Heart right ventricle (tissue), 16 donors: ENCODE measurements at regions of chr3 and their contacts with region 1.

Region 1: GRCh38 chr3:138668107-138668506 is 59.5 kb downstream of the FAIM start:
- DNase-seq: no peak
- ATAC-seq: no peak
- H3K4me3 ChIP-seq: no peak overlapping the region
- H3K27ac ChIP-seq: no peak overlapping the region
- H3K4me1 ChIP-seq: peaks cover 0 to 20% (median 4%) of the 10 kb centered on the region in 9 donors
- H3K27me3 ChIP-seq: no peaks in the 10 kb centered on the region
- CTCF ChIP-seq: no peak

Region 2: GRCh38 chr3:138640537-138640936 is 27.6 kb before region 1 on chr3:
- intact Hi-C with region 1: no loop called
- DNase-seq: no peak
- ATAC-seq: no peak
- H3K4me3 ChIP-seq: no peak overlapping the region
- H3K27ac ChIP-seq: no peak overlapping the region
- H3K4me1 ChIP-seq: no peaks in the 10 kb centered on the region
- H3K27me3 ChIP-seq: no peaks in the 10 kb centered on the region
- CTCF ChIP-seq: no peak

Region 3: DNA sequence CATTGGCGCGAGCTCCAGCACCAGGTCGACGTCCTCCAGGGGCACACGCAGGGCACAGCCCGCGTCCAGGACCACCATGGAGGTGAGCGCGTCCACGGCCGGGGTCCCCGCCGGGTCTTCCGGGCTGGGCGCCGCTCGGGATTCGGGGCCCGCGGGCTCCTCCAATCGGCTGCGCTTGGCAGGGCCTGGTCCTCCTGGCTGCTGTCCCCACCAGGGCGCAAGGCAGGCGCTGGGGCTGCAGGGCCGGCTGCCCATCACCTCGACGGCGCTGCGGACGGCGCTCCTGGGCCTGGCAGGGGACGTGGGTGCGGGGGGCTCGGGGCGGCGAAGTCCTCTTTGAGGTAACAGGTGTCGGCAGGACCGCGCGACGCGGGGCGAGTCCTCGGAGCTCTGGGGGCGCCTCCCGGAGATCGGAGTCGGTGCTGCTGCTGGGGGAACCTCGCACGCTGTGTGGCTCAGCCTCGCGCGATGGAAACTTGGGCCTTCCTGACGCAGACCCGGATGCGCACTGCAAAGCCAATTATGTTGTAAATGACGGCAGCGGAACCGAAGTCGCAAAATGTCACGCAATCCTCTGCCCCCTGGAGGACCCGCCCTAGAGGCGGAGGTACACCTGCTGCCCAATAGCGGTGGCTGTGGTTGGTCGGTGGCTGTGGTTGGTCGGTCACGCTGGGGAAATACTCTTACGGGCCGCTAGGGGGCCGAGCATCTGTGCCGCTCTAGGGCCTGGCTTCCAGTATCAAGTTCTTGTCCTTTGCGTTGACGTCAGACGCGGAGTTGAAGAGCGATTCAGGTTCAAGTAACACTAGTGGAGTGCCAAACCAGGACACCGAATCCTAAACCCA is 376.5 kb after region 1 on chr3 and contains the start of gene PRR23C:
- intact Hi-C with region 1: no loop called
- DNase-seq: no peak
- ATAC-seq: no peak
- H3K4me3 ChIP-seq: no peak within 1 kb of the TSS
- H3K27ac ChIP-seq: no peak within 1 kb of the TSS
- H3K4me1 ChIP-seq: no peaks in the 10 kb centered on the region
- H3K27me3 ChIP-seq: peaks cover 0 to 32% (median 16%) of the 10 kb centered on the region in 7 donors
- CTCF ChIP-seq: no peak
- total RNA-seq, gene PRR23C: not detected

Region 4: GRCh38 chr3:139241783-139242182 is 573.7 kb after region 1 on chr3:
- intact Hi-C with region 1: no loop called
- DNase-seq: no peak
- ATAC-seq: no peak
- H3K4me3 ChIP-seq: no peak overlapping the region
- H3K27ac ChIP-seq: no peak overlapping the region
- H3K4me1 ChIP-seq: no peaks in the 10 kb centered on the region
- H3K27me3 ChIP-seq: peaks cover 0 to 40% (median 11%) of the 10 kb centered on the region in 7 donors
- CTCF ChIP-seq: no peak

Region 5: DNA sequence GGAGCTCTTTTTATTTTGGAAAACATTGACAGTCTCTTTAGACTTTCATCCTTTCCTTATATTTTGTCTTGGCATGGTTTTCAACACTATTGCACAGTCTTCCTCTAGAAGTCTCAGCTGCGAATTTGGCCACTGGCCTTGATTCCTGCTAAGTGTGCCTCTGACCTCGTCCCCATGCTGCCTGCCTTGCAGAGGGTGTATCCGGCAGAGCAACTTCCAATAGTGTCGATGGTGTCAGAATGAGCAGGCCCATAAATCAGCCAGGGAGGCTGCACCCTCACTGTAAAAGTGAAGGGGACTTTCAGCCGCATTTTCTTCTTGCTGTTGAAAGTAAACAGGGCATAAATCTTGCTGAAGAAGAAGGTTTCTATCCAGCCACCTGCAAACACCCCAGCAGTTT is 1673.1 kb after region 1 on chr3:
- intact Hi-C with region 1: loop called in 1 of 10 experiments (anchors 10 kb)
- DNase-seq: no peak
- ATAC-seq: peak in 1 of 8 donors; percentile 37
- H3K4me3 ChIP-seq: no peak overlapping the region
- H3K27ac ChIP-seq: no peak overlapping the region
- H3K4me1 ChIP-seq: no peaks in the 10 kb centered on the region
- H3K27me3 ChIP-seq: no peaks in the 10 kb centered on the region
- CTCF ChIP-seq: no peak